Thyroid gland (tissue), 4 donors: ENCODE measurements at regions of chr17 and their contacts with region 1.

Region 1: GRCh38 chr17:76414334-76415295 is 30.2 kb downstream of the SPHK1 start:
- DNase-seq: peak; percentile 91 to 93
- H3K4me3 ChIP-seq: no peak overlapping the region
- H3K27ac ChIP-seq: peak overlapping the region; percentile 8 to 35 (median 20)
- H3K4me1 ChIP-seq: peaks cover 64 to 81% of the 10 kb centered on the region in 2 donors
- H3K27me3 ChIP-seq: no peaks in the 10 kb centered on the region
- CTCF ChIP-seq: no peak
- POLR2A ChIP-seq: no peak

Region 2: GRCh38 chr17:76278952-76279741 is 135.5 kb before region 1 on chr17:
- intact Hi-C with region 1: no loop called
- DNase-seq: peak; percentile 98
- H3K4me3 ChIP-seq: no peak overlapping the region
- H3K27ac ChIP-seq: peak overlapping the region; percentile 39 to 64 (median 61)
- H3K4me1 ChIP-seq: peaks cover 7 to 27% of the 10 kb centered on the region in 2 donors
- H3K27me3 ChIP-seq: no peaks in the 10 kb centered on the region
- CTCF ChIP-seq: peak; percentile 97 to 99 (median 98)
- POLR2A ChIP-seq: peak in 1 of 2 donors; percentile 18

Region 3: DNA sequence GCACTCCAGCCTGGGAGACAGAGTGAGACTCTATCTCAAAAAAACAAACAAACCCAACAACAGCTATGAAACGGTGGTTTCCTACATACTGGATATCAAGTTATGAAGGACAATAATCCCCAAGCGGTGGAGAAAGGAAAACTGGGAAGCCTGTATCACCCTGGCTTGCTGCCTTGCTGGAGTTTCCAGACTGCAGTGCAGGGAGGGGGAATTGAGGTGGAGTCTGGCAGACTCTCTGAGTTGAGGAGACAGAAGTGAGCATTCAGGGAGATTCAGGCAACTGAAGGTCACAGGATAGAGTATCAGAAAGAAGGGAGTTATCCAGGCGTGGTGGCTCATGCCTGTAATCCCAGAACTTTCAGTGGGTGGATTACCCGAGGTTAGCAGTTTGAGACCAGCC is 118.4 kb before region 1 on chr17:
- intact Hi-C with region 1: no loop called
- DNase-seq: no peak
- H3K4me3 ChIP-seq: no peak overlapping the region
- H3K27ac ChIP-seq: no peak overlapping the region
- H3K4me1 ChIP-seq: no peaks in the 10 kb centered on the region
- H3K27me3 ChIP-seq: no peaks in the 10 kb centered on the region
- CTCF ChIP-seq: no peak
- POLR2A ChIP-seq: no peak

Region 4: GRCh38 chr17:76327696-76328095 is 86.9 kb before region 1 on chr17:
- intact Hi-C with region 1: no loop called
- DNase-seq: no peak
- H3K4me3 ChIP-seq: no peak overlapping the region
- H3K27ac ChIP-seq: no peak overlapping the region
- H3K4me1 ChIP-seq: no peaks in the 10 kb centered on the region
- H3K27me3 ChIP-seq: no peaks in the 10 kb centered on the region
- CTCF ChIP-seq: no peak
- POLR2A ChIP-seq: no peak

Region 5: GRCh38 chr17:76446449-76447231 is 32.0 kb after region 1 on chr17:
- intact Hi-C with region 1: loop called (anchors 5 kb)
- DNase-seq: peak; percentile 77 to 78
- H3K4me3 ChIP-seq: no peak overlapping the region
- H3K27ac ChIP-seq: peak overlapping the region; percentile 5 to 56 (median 44)
- H3K4me1 ChIP-seq: peaks cover 38 to 50% of the 10 kb centered on the region in 2 donors
- H3K27me3 ChIP-seq: no peaks in the 10 kb centered on the region
- CTCF ChIP-seq: no peak
- POLR2A ChIP-seq: no peak